ENCODE measurements at regions of chr17 and their contacts with region 1.

Region 1: DNA sequence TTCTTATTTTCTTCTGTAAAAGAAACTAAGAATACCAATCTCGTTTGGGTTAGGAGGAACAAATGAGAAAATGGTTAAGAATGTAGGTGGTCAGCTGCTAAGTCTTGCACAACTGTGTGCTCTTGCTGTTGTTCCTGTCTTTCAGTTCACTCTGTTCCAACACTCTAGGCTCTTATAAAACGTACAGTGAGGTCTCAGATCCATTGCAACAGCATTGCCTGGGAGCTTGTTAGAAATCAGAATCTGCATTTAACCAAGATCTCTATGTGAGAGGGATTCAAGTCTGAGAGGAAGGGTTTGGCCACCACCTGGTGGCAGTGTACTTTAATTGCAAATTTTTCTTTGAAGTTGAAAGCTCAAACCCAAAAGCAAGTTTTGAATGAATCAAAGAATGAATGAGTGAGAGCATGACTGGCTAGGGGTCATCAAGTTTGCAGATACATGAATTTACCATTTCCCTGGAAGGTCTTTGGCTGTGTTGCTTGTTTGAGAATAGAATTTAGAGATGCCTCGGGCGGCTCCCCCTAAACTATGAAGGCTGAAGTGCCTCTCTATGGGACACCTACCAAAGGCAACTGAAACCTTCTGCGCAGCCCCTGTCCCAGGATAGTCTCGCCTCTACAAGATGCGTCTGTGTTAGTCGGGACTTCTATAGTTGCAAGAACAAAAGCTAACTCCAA is 2.5 kb downstream of the ALOX15B start:
- H3K4me3 ChIP-seq: no peak overlapping the region
- H3K27ac ChIP-seq: no peak overlapping the region
- H3K4me1 ChIP-seq: no peaks in the 10 kb centered on the region
- CTCF ChIP-seq: peak; percentile 64

Region 2: DNA sequence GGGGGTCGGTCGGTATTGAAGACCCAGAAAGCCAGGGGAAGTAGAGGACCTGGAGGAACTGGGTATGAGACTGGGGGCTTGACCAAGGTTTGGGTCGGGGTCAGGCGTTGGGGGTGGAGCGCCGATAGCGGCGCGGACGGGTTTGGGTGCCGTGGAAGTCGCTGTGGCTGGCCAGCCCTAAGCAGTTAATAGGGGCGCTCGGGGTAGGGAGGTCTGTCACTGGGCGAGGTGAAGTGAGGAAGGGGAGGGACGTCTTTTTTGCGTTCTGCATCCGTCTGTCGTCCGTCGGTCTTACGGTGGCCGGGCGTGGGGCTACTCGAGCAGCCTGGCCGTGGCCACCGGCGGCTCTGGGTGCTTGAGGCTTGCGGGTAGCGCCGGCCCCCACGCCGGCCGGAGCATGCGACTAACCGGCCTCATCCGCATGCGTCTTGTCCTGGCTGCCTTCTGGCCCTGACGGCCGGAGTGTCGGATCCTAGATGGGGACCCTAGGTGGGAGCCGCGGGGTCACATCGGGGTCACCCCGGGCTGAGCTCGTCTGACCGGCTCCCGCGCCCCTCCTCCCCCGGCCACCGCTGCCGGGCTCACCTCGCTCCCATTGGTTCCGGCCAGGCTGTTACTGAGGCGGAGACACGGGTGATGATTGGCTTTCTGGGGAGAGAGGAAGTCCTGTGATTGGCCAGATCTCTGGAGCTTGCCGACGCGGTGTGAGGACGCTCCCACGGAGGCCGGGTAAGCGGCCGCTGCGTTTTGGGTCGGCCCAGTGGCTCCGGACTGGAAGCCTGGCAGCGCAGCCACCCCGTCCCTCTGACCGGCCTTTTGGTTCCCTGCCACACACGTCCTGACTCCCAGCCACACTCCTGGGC is 196.9 kb before region 1 on chr17:
- CTCF ChIA-PET with region 1: no interaction called
- POLR2A ChIA-PET with region 1: no interaction called
- H3K4me3 ChIP-seq: peak overlapping the region; percentile 70
- H3K27ac ChIP-seq: peak overlapping the region; percentile 96
- H3K4me1 ChIP-seq: peaks cover 16% of the 10 kb centered on the region
- CTCF ChIP-seq: 0 out of 2 replicates have a peak, but pooled peaks have one; percentile 49

Region 3: GRCh38 chr17:7862692-7863437 is 178.5 kb before region 1 on chr17:
- CTCF ChIA-PET with region 1: interaction called, 21 read pairs
- POLR2A ChIA-PET with region 1: no interaction called
- H3K4me3 ChIP-seq: no peak overlapping the region
- H3K27ac ChIP-seq: no peak overlapping the region
- H3K4me1 ChIP-seq: peaks cover 5% of the 10 kb centered on the region
- CTCF ChIP-seq: peak; percentile 67

Region 4: GRCh38 chr17:7915611-7916382 is 125.6 kb before region 1 on chr17 and contains the start of gene RNF227:
- CTCF ChIA-PET with region 1: interaction called, 41 read pairs
- POLR2A ChIA-PET with region 1: interaction called, 10 read pairs
- H3K4me3 ChIP-seq: peak within 1 kb of the TSS; percentile 58
- H3K27ac ChIP-seq: peak within 1 kb of the TSS; percentile 90
- H3K4me1 ChIP-seq: peaks cover 14% of the 10 kb centered on the region
- CTCF ChIP-seq: no peak; the same call in 1 of the 2 replicates

Region 5: GRCh38 chr17:8016632-8017478 is 24.5 kb before region 1 on chr17:
- CTCF ChIA-PET with region 1: interaction called, 134 read pairs
- POLR2A ChIA-PET with region 1: interaction called, 3 read pairs
- H3K4me3 ChIP-seq: peak overlapping the region; percentile 40
- H3K27ac ChIP-seq: peak overlapping the region; percentile 49; the same call in 1 of the 2 replicates
- H3K4me1 ChIP-seq: no peaks in the 10 kb centered on the region
- CTCF ChIP-seq: peak; percentile 88

Region 6: GRCh38 chr17:8029135-8029534 is 12.3 kb before region 1 on chr17:
- CTCF ChIA-PET with region 1: interaction called, 18 read pairs
- POLR2A ChIA-PET with region 1: interaction called, 9 read pairs
- H3K4me3 ChIP-seq: no peak overlapping the region
- H3K27ac ChIP-seq: no peak overlapping the region
- H3K4me1 ChIP-seq: no peaks in the 10 kb centered on the region
- CTCF ChIP-seq: no peak

Region 7: GRCh38 chr17:8080208-8080798 is 38.9 kb after region 1 on chr17:
- CTCF ChIA-PET with region 1: no interaction called
- POLR2A ChIA-PET with region 1: no interaction called
- H3K4me3 ChIP-seq: peak overlapping the region; percentile 55
- H3K27ac ChIP-seq: peak overlapping the region; percentile 32; the same call in 1 of the 2 replicates
- H3K4me1 ChIP-seq: peaks cover 7% of the 10 kb centered on the region
- CTCF ChIP-seq: no peak

Region 8: DNA sequence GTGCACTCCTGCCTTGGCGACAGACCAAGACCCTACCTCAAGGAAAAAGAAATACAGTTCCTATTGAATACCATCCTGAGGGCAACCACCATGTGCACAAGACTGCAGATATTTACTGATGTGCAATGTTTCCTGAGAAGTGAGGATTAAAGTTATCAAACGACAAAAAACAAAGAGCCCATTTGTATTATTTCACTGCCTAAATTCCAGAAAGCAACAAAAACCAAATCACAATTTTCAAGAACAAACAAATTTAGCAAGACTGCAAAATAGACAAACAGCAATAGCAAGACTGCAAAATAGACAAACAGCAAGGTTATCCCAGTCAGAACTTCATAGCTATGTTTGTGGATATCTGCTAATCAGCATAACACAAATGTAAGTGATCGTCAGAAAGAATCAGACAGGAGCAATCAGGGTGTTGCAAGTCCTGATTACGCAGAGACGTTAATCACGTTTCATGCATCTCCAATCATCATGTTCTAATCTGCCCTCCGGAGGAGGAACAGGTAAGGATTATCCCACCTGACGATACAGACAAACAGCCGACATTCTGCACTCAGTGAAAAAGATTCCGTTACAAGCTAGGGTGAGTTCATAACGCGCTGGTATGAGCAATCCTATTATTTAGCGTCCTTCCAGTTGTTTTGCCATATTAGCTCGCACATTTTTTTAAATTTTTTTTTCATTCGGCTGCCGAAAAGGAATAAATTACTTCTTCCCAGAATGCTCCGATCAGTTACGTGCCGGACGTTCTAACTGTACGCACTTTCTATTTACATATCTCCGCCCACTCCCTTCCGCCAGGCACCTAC is 131.9 kb after region 1 on chr17:
- CTCF ChIA-PET with region 1: no interaction called
- POLR2A ChIA-PET with region 1: no interaction called
- H3K4me3 ChIP-seq: peak overlapping the region; percentile 53
- H3K27ac ChIP-seq: peak overlapping the region; percentile 89
- H3K4me1 ChIP-seq: peaks cover 10% of the 10 kb centered on the region
- CTCF ChIP-seq: no peak